A549 (cell line): ENCODE measurements at regions of chr1 and their contacts with region 1.

Region 1: DNA sequence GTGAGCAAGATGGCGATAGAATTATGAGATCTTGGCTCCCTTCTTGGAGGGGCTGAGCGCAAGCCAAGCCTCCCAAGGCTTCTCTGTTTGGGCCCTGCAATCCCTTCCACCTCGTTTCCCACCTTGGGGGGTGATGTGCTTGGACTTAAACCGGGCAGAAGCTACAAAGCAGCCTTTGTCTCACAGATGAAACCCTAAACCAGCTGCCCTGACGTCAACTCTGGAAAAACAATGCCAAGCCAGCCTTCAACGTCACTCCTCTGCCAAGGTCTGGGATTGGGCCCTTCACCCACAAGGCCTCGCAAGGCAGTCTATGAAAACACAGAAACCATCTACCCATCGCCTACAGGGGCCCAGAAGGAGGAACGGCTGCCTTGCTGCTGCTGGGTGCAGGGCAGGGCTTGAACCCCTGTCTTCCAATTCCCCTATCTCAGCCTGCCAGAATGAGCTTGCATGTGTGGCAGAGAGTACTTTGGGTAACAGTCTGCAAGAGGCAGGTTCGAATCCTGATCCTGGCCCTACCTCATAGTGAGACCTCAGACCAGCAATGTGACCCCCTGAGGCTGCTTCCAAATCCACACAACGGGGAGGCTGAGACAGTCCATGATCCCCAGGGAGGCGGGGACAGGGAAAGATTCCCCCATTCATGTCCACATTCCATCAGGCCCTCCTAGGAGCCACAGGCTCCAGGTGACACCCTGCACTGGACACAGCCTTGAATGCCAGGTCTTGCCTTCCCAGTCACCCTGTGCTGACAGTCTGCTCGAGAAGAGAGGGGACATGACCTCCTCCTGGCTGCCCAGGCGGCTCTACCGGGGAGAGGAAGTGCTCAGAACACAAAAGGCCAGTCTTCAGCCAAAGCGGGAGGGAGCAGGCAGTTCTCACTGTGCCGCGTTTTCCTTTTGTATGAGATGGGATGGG is 15.0 kb downstream of the IFFO2 start:
- DNase-seq: peak in 1 of 2 experiments; percentile 66
- ATAC-seq: no peak; a peak in 1 of 6 replicates
- H3K4me3 ChIP-seq: no peak overlapping the region
- H3K27ac ChIP-seq: peak overlapping the region; percentile 37 to 68; a peak in 5 of 6 replicates
- H3K4me1 ChIP-seq: peaks cover 83% of the 10 kb centered on the region
- CTCF ChIP-seq: no peak
- EP300 ChIP-seq: no peak
- POLR2A ChIP-seq: no peak
- RAD21 ChIP-seq: no peak

Region 2: DNA sequence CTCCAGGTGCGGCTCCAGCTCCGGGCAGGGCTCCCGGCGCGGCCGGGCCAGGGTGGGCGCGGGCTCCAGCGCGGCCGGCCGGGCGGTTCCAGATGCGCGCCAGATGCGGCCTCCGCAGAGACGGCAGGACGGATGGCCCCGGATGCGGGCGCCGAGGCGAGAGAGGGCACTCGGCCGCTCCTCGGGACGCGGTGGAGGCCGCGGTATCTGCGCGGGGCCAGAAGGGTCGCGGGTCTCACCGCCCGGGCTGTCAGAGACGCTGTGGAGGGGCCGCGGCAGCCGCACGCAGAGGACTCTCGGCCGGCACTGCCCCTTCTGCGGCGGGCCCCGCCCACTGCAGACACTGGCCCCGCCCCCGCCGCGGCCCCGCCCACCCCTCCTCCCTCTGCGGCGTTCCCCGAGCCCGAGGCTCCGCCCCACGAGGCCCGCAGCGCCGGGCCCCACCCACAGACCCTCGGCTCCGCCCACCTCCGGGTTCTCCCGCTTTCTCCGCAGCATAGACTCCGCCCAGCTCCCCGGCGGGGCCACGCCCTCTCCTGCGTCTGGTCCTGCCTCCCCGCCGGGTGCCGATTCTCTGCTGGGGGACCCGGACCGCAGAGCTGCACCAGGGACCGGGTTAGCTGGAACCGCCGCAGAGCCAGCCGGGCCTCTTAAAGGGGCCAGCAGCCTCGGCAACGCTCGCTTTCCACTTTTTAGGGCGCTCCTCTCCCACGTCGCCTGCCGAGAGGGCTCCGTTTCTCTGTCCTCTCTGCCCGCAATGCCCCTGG is 15.1 kb after region 1 on chr1 and contains the start of gene IFFO2:
- CTCF ChIA-PET with region 1: interaction called, 10 read pairs
- POLR2A ChIA-PET with region 1: no interaction called
- DNase-seq: peak; percentile 87 to 92
- ATAC-seq: peak; percentile 74 to 88
- H3K4me3 ChIP-seq: peak within 1 kb of the TSS; percentile 91
- H3K27ac ChIP-seq: peak within 1 kb of the TSS; percentile 85 to 96
- H3K4me1 ChIP-seq: peaks cover 37% of the 10 kb centered on the region
- CTCF ChIP-seq: no peak
- EP300 ChIP-seq: no peak
- POLR2A ChIP-seq: peak; percentile 92
- RAD21 ChIP-seq: no peak
- polyA plus RNA-seq, gene IFFO2: 23.0 and 24.3 TPM in 2 replicates

Region 3: GRCh38 chr1:18997508-18997907 is 56.0 kb after region 1 on chr1:
- CTCF ChIA-PET with region 1: no interaction called
- POLR2A ChIA-PET with region 1: no interaction called
- DNase-seq: no peak
- ATAC-seq: no peak
- H3K4me3 ChIP-seq: no peak overlapping the region
- H3K27ac ChIP-seq: no peak overlapping the region
- H3K4me1 ChIP-seq: no peaks in the 10 kb centered on the region
- CTCF ChIP-seq: no peak
- EP300 ChIP-seq: no peak
- POLR2A ChIP-seq: no peak
- RAD21 ChIP-seq: no peak